ENCODE measurements at regions of chr13 and their contacts with region 1.

Region 1: DNA sequence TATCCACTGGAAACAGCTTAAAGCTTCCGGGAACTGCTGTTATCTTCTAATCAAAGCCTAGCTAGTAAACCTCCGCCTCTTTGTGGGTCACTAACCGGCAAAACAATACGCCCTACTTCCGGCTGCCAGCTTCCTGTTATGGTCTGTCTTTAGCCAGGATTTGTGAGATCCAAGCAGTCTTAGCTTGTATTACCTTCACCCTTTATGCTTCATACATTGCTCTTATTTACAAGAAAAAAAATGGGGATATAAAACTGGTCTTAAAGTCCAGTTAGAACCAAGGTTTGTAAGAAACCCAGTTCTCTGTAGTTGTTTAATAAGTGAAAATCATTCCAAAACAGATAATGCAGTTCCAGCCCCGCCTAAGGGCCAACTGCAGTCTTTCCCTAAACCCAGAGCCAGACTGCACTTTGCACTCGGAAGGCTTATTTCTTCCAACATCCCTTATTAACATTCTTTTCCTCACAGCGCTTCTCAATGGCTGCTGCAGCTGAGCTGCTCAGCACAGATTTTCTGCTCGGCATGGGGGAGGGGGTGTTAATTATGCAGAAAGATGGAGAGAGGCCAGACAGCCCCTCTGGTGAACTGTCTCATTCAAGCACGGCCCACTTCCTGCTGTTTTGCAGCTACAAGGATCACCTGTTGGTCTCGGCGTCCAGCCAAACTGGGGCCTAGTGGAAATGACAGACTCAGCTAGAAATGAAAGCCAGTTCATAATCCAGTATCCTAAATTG is 368.4 kb downstream of the KLF12 start:
- DNase-seq: peak; percentile 73 to 93 (median 78)
- H3K4me3 ChIP-seq: peak overlapping the region; percentile 14 to 40
- H3K4me3 Mint-ChIP-seq: peak overlapping the region; percentile 78 to 92 (median 84)
- H3K27ac ChIP-seq: peak overlapping the region; percentile 47
- H3K27ac Mint-ChIP-seq: peak overlapping the region; percentile 96 to 99 (median 96)
- H3K4me1 ChIP-seq: peaks cover 84% of the 10 kb centered on the region
- H3K4me1 Mint-ChIP-seq: peaks cover 72 to 86% (median 80%) of the 10 kb centered on the region in 4 donors
- H3K27me3 ChIP-seq: no peaks in the 10 kb centered on the region
- H3K27me3 Mint-ChIP-seq: no peaks in the 10 kb centered on the region

Region 2: DNA sequence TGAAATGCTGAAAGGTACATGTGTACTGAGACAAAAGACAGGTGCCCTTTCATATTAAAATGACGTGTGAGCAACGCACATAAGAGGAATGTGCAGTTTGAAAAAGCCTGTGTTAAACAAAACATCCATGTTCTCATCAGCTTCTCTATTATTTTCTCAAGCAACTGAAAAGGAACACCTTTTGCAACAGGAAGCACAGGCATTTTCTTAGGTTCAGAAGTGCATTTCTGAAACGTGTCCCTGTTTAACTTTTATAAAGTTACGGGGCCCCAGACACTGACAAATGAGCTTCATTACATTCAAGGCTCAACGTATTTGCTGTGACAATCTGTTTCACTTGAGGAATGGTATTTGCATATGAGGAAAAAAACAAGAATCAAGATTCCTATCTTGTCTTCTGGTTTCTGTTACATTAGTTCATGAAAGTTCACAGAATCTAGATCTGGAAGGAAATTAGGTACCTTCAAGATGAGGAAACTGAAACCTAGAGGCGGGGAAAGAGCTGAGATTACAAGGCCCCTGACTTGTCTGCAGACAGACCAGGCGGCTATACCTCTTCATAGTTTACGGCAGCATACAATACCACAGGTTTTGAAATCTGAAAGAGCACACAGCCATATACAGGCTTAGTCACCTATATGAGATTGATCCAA is 63.3 kb before region 1 on chr13:
- CTCF ChIA-PET with region 1: interaction called, 4 read pairs
- POLR2A ChIA-PET with region 1: interaction called, 6 read pairs
- intact Hi-C with region 1: loop called (anchors 5 kb)
- DNase-seq: peak; percentile 52 to 84 (median 74)
- H3K4me3 ChIP-seq: no peak overlapping the region
- H3K4me3 Mint-ChIP-seq: peak overlapping the region; percentile 67 to 88 (median 80)
- H3K27ac ChIP-seq: peak overlapping the region; percentile 29
- H3K27ac Mint-ChIP-seq: peak overlapping the region; percentile 89 to 98 (median 95)
- H3K4me1 ChIP-seq: peaks cover 46% of the 10 kb centered on the region
- H3K4me1 Mint-ChIP-seq: peaks cover 31 to 62% (median 33%) of the 10 kb centered on the region in 4 donors
- H3K27me3 ChIP-seq: no peaks in the 10 kb centered on the region
- H3K27me3 Mint-ChIP-seq: no peaks in the 10 kb centered on the region

Region 3: DNA sequence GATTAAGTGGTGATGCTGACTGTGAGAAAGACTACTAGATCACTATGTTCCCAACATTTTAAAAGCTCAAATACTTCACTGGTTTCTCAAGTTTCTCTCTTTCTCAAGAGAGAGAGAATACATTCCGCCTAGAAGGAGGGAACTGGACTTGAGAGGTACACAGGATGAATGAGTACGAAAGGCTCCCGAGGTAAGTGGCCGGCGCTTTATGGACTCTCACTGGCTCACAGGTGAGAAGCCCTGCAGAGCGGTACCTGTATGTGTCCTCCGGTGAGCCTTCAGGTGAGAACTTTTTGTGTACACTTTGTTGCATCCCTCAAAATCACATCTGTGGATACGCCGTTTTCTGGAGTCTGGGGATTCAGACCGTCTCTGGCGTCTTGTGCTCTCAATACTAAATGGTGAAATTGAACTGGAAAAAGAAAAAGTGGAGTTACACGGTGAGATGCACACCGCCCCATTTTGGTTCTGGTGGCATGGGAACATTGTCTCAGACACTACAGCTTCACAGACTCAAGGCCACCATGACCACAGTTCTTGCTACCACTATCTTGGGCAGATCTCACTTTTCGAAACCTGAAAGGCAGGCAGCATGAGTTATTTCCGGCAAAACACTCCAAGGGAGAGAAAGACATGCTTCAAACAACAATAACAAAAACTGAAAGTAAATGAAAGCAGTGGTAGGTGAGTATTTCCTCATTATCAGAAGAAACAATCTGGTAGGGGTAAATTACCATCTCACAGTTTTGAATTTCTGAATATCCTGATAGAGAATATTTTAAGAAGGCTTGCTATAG is 50.5 kb before region 1 on chr13:
- CTCF ChIA-PET with region 1: interaction called, 7 read pairs
- POLR2A ChIA-PET with region 1: interaction called, 30 read pairs
- intact Hi-C with region 1: loop called (anchors 1 kb)
- DNase-seq: peak; percentile 71 to 91 (median 79)
- H3K4me3 ChIP-seq: peak overlapping the region in 1 of 2 donors; percentile 6
- H3K4me3 Mint-ChIP-seq: peak overlapping the region; percentile 58 to 88 (median 78)
- H3K27ac ChIP-seq: peak overlapping the region; percentile 41
- H3K27ac Mint-ChIP-seq: peak overlapping the region; percentile 84 to 98 (median 94)
- H3K4me1 ChIP-seq: peaks cover 52% of the 10 kb centered on the region
- H3K4me1 Mint-ChIP-seq: peaks cover 48 to 70% (median 64%) of the 10 kb centered on the region in 4 donors
- H3K27me3 ChIP-seq: no peaks in the 10 kb centered on the region
- H3K27me3 Mint-ChIP-seq: no peaks in the 10 kb centered on the region

Region 4: DNA sequence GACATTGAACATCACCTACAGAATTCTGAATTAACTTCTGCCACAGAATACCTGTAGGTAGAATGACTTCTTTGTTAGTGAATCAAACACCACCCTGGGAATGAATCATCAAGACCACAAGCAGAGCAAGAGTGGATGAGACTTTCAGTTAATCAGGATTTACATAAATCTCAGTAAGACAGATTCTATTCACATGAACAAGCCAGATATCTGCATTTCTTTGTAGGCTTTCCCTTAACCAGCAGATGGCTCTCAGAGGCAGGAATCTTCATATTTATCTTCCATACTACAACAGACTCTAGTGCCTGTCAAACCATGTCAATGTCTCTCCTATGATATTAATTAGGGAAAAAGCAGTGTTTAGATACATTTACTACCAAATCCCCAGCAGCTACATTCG is 43.7 kb before region 1 on chr13:
- CTCF ChIA-PET with region 1: interaction called, 15 read pairs
- POLR2A ChIA-PET with region 1: interaction called, 30 read pairs
- intact Hi-C with region 1: no loop called
- DNase-seq: no peak
- H3K4me3 ChIP-seq: no peak overlapping the region
- H3K4me3 Mint-ChIP-seq: peak overlapping the region in 1 of 8 donors; percentile 3
- H3K27ac ChIP-seq: no peak overlapping the region
- H3K27ac Mint-ChIP-seq: peak overlapping the region in 6 of 7 donors; percentile 42 to 82 (median 68)
- H3K4me1 ChIP-seq: peaks cover 25% of the 10 kb centered on the region
- H3K4me1 Mint-ChIP-seq: peaks cover 40 to 64% (median 50%) of the 10 kb centered on the region in 4 donors
- H3K27me3 ChIP-seq: no peaks in the 10 kb centered on the region
- H3K27me3 Mint-ChIP-seq: no peaks in the 10 kb centered on the region

Region 5: GRCh38 chr13:73754727-73755292 is 11.0 kb before region 1 on chr13:
- CTCF ChIA-PET with region 1: interaction called, 78 read pairs
- POLR2A ChIA-PET with region 1: interaction called, 57 read pairs
- intact Hi-C with region 1: loop called (anchors 1 kb)
- DNase-seq: peak in 4 of 5 donors; percentile 42 to 61 (median 50)
- H3K4me3 ChIP-seq: no peak overlapping the region
- H3K4me3 Mint-ChIP-seq: no peak overlapping the region
- H3K27ac ChIP-seq: no peak overlapping the region
- H3K27ac Mint-ChIP-seq: peak overlapping the region in 6 of 7 donors; percentile 8 to 84 (median 56)
- H3K4me1 ChIP-seq: peaks cover 43% of the 10 kb centered on the region
- H3K4me1 Mint-ChIP-seq: peaks cover 36 to 58% (median 49%) of the 10 kb centered on the region in 4 donors
- H3K27me3 ChIP-seq: no peaks in the 10 kb centered on the region
- H3K27me3 Mint-ChIP-seq: no peaks in the 10 kb centered on the region

Region 6: DNA sequence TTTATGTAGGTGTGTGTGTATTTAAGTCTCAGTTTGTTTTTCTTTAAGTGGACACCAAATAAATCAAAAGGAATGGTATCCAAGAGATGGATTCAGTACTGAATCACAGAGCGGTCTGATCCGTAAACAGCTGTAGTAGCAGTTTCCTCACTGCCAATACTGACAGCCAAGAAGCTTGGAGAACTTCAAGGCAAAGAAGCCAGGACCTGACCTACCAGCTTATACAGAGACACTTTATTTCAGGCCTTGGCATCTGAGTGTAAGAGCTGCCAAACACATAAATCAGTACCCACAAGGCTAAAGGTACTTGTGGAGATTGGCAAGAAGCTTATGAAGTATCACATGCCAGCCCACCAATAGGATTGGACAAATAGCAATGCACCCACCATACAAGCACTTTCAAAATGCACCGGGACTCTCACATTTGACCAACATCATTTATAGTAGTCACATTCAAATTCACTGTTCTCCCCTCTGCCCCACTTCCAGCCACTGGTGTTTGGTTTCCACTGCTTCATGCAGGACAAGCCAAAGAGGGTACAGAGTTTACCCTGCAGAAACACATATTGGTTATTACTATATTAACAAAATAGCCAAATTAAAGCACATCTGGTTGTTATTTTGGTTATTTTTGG is 10.4 kb after region 1 on chr13:
- CTCF ChIA-PET with region 1: interaction called, 18 read pairs
- POLR2A ChIA-PET with region 1: interaction called, 16 read pairs
- intact Hi-C with region 1: no loop called
- DNase-seq: no peak
- H3K4me3 ChIP-seq: no peak overlapping the region
- H3K4me3 Mint-ChIP-seq: no peak overlapping the region
- H3K27ac ChIP-seq: no peak overlapping the region
- H3K27ac Mint-ChIP-seq: peak overlapping the region in 3 of 7 donors; percentile 6 to 24 (median 6)
- H3K4me1 ChIP-seq: peaks cover 7% of the 10 kb centered on the region
- H3K4me1 Mint-ChIP-seq: peaks cover 35 to 50% (median 42%) of the 10 kb centered on the region in 4 donors
- H3K27me3 ChIP-seq: no peaks in the 10 kb centered on the region
- H3K27me3 Mint-ChIP-seq: no peaks in the 10 kb centered on the region

Region 7: DNA sequence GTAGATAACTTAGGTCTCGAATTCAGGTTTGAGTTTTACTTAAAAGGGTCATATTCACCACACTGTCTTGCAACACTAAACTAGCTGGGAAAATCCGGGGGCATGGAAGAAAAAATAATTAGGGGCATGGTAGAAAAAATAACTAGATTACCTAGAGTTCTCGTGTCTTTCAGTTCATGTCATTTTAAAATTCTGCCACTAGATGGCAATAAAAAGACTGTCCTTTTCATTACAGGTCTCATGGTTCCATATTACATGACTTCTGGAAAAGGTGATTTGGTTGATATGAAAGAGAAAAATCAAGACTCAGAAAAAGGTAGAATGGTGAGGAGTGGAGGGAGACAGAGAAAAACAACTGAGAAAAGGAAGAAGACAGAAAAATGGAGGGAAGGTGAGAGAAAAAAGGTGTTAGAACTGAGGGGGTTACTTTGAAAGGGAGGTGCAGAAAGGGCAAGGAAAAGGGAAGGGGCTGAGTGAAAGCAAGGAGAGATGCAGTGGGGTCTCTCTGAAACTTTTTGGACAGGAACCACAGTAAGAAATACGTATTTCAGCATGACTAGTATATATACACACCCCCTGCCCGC is 69.4 kb after region 1 on chr13:
- CTCF ChIA-PET with region 1: interaction called, 3 read pairs
- POLR2A ChIA-PET with region 1: no interaction called
- intact Hi-C with region 1: loop called (anchors 2 kb)
- DNase-seq: peak in 4 of 5 donors; percentile 45 to 56 (median 49)
- H3K4me3 ChIP-seq: no peak overlapping the region
- H3K4me3 Mint-ChIP-seq: no peak overlapping the region
- H3K27ac ChIP-seq: no peak overlapping the region
- H3K27ac Mint-ChIP-seq: no peak overlapping the region
- H3K4me1 ChIP-seq: peaks cover 42% of the 10 kb centered on the region
- H3K4me1 Mint-ChIP-seq: peaks cover 34 to 69% (median 47%) of the 10 kb centered on the region in 4 donors
- H3K27me3 ChIP-seq: no peaks in the 10 kb centered on the region
- H3K27me3 Mint-ChIP-seq: no peaks in the 10 kb centered on the region

Region 8: GRCh38 chr13:74046431-74046830 is 280.6 kb after region 1 on chr13:
- CTCF ChIA-PET with region 1: no interaction called
- POLR2A ChIA-PET with region 1: no interaction called
- intact Hi-C with region 1: no loop called
- DNase-seq: no peak
- H3K4me3 ChIP-seq: no peak overlapping the region
- H3K4me3 Mint-ChIP-seq: no peak overlapping the region
- H3K27ac ChIP-seq: no peak overlapping the region
- H3K27ac Mint-ChIP-seq: no peak overlapping the region
- H3K4me1 ChIP-seq: peaks cover 67% of the 10 kb centered on the region
- H3K4me1 Mint-ChIP-seq: peaks cover 61 to 86% (median 73%) of the 10 kb centered on the region in 4 donors
- H3K27me3 ChIP-seq: no peaks in the 10 kb centered on the region
- H3K27me3 Mint-ChIP-seq: no peaks in the 10 kb centered on the region